ENCODE measurements at regions of chr2 and their contacts with region 1.

Region 1: GRCh38 chr2:202289394-202290204 is 24.0 kb downstream of the NOP58 start:
- DNase-seq: no peak
- H3K4me3 ChIP-seq: no peak overlapping the region
- H3K27ac ChIP-seq: no peak overlapping the region
- H3K4me1 ChIP-seq: no peaks in the 10 kb centered on the region
- H3K27me3 ChIP-seq: no peaks in the 10 kb centered on the region
- CTCF ChIP-seq: no peak
- POLR2A ChIP-seq: no peak

Region 2: DNA sequence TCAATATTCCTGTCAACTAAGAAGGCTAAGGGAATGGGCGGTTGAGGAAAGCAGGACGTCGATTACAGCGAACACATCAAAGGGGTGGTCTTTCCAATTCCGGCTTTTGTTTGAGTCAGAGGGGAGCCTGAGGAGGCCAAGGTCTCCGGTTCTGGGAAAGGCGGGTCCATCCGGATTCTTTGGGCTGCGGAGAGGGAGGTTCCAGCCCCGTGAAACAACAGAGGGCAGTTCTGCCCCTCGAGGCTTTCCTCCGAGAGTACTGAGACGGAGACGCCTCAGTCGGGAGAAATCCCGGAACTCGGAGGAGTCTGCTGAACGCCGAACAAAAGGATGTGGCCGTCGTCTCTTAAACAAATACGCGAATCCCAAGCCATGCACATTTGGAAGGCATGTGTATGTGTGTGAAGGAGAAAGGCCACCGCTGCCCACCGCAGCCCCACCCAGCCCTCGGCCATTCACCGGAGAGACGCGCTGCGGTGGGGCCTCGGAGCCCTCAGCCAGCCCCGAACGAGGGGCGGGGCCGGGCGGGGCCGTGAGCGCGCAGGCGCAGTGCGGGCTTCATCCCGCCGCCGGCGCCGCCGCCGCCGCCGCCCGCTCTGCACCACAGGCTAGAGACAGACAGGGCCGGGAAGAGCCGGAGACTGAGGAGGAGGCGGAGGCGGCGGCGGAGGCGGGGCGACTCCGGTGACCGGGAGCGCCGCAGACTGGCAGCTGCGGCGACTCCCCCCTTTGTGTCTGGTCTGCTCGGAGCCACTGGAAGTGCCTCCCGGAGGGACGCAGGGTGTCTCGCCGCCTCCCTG is 86.2 kb after region 1 on chr2 and contains the start of gene BMPR2:
- intact Hi-C with region 1: no loop called
- DNase-seq: peak in 1 of 2 donors; percentile 94
- H3K4me3 ChIP-seq: peak within 1 kb of the TSS; percentile 89 to 91
- H3K27ac ChIP-seq: peak within 1 kb of the TSS; percentile 99
- H3K4me1 ChIP-seq: peaks cover 15% of the 10 kb centered on the region
- H3K27me3 ChIP-seq: no peaks in the 10 kb centered on the region
- CTCF ChIP-seq: no peak
- POLR2A ChIP-seq: peak in 1 of 2 donors; percentile 87
- total RNA-seq, gene BMPR2: 47.9 TPM

Region 3: GRCh38 chr2:203080447-203081045 is 790.9 kb after region 1 on chr2:
- intact Hi-C with region 1: loop called (anchors 5 kb)
- DNase-seq: no peak
- H3K4me3 ChIP-seq: no peak overlapping the region
- H3K27ac ChIP-seq: no peak overlapping the region
- H3K4me1 ChIP-seq: no peaks in the 10 kb centered on the region
- H3K27me3 ChIP-seq: no peaks in the 10 kb centered on the region
- CTCF ChIP-seq: no peak
- POLR2A ChIP-seq: no peak

Measured in vagina (tissue), 2 donors.